ENCODE measurements at regions of chr2 and their contacts with region 1.

Region 1: DNA sequence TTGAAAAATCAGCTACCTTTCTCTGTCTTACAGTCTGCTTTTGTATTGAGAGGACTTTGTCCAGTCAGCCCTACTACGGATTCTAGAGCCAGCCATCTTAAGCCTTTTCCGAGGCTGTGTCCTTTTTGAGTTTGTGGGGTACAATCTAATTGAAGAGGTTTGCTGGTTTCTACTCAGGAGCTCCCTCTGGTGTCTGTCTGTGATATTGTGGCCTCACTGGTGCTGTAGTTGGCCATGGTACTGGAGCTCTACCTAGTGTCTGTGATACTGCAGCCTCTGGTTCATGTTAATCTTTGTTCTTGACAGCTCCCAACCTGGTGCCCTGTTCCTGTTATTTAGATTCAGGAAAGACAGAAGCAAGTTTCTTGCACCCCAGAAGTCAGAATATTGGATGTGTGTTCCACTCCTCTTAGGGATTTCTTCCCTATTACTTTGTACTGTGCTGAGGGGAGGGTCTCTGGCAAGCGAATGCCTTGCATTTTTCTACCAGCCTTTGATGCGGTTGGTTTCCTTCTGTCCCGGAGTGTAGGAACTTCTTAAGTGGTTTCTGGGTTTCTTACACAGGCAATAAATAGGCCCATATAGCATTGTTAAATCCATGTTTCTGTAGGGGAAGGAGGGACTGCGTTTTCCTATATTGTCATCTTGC is 78.5 kb downstream of the ACSL3 start:
- DNase-seq: peak; percentile 35 to 55 (median 52)
- H3K4me3 ChIP-seq: no peak overlapping the region
- H3K4me3 Mint-ChIP-seq: no peak overlapping the region
- H3K27ac ChIP-seq: no peak overlapping the region
- H3K27ac Mint-ChIP-seq: no peak overlapping the region
- H3K4me1 ChIP-seq: no peaks in the 10 kb centered on the region
- H3K4me1 Mint-ChIP-seq: no peaks in the 10 kb centered on the region
- H3K27me3 ChIP-seq: no peaks in the 10 kb centered on the region
- H3K27me3 Mint-ChIP-seq: no peaks in the 10 kb centered on the region
- CTCF ChIP-seq: peak; percentile 86

Region 2: DNA sequence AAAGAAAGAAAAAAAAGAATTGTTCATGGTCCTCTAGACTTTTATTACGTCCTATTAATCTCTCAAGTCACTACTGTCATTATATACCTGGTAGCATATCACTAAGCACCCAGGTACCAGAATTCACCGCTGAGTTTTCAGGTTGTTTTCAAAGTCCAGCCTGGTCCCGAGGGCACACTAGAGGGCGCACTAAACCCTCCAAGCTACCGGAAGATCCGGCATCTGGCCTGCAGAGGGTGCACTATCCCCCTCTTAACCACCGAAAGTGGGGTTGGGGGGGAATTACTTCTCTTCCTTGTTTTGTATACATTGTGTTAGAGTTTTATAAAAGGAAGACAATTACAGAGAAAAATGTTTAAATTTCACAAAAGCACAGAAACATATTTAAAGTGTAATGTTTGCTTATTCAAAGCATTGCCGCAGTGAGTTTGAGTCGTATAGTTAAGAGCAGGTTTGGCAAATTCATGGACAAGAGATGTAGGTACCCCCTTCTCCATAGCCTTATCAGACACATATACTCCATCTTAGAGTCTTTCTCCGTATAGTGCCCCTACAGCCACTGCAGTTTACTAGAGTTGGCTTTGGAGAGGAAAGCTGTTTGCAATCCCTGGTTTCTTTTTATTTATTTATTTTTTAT is 248.7 kb before region 1 on chr2:
- intact Hi-C with region 1: loop called in 1 of 2 experiments (anchors 5 kb)
- DNase-seq: peak; percentile 79 to 86 (median 86)
- H3K4me3 ChIP-seq: no peak overlapping the region
- H3K4me3 Mint-ChIP-seq: no peak overlapping the region
- H3K27ac ChIP-seq: no peak overlapping the region
- H3K27ac Mint-ChIP-seq: no peak overlapping the region
- H3K4me1 ChIP-seq: peaks cover 0 to 6% of the 10 kb centered on the region in 2 donors
- H3K4me1 Mint-ChIP-seq: peaks cover 17% of the 10 kb centered on the region
- H3K27me3 ChIP-seq: no peaks in the 10 kb centered on the region
- H3K27me3 Mint-ChIP-seq: no peaks in the 10 kb centered on the region
- CTCF ChIP-seq: peak; percentile 100